ENCODE measurements at regions of chr10 and their contacts with region 1.

Region 1: GRCh38 chr10:4767033-4767814 is 58.8 kb upstream of the AKR1E2 start:
- DNase-seq: no peak
- ATAC-seq: peak; percentile 74
- H3K4me3 ChIP-seq: no peak overlapping the region
- H3K27ac ChIP-seq: no peak overlapping the region
- H3K4me1 ChIP-seq: peaks cover 3 to 5% of the 10 kb centered on the region in 2 donors
- H3K27me3 ChIP-seq: no peaks in the 10 kb centered on the region

Region 2: GRCh38 chr10:3197348-3198003 is 1569.7 kb before region 1 on chr10:
- intact Hi-C with region 1: loop called (anchors 10 kb)
- DNase-seq: peak; percentile 87 to 94
- ATAC-seq: peak; percentile 94
- H3K4me3 ChIP-seq: no peak overlapping the region
- H3K27ac ChIP-seq: peak overlapping the region in 1 of 2 donors; percentile 22
- H3K4me1 ChIP-seq: no peaks in the 10 kb centered on the region
- H3K27me3 ChIP-seq: no peaks in the 10 kb centered on the region

Region 3: DNA sequence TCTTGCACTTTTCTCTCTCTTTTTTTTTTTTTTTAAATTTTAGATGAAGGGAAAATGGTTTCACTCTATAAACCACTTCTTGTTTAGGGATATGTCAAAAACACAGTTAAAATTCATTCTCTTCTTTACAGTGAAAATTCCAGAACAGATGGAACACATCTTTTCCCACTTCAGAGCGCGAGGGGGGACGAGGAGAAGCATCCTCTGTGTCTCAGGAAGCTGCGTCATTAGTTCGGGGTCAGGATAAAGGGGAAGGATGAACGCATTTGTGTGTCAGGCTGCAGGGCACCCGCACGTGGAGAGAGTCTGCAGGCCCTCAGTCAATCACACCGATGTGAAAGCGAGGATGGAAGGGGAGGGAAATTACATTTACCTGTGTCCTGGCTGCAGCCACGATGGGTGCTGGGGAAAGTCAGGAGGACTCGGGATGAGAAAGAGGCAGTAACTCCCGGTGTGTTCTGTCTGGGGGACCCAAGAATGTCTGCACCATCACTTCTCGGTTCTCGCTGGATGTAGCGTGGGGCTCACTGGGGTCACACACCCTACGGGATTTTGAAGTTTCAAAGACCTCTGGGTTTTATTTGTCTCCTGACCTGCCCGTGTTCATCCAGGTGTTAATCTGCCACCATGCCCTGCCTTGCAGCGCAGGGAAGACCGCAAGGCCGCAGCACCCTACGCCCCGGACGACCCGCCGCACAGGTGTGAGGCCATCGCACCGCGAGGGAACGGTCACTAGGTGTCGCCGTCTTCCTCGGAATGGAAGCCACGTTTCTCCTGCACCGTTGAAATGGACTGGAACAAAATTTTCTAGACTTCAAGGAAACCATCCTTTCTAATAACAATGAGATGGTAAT is 1527.9 kb before region 1 on chr10:
- intact Hi-C with region 1: loop called (anchors 5 kb)
- DNase-seq: peak; percentile 82 to 92
- ATAC-seq: peak; percentile 87
- H3K4me3 ChIP-seq: no peak overlapping the region
- H3K27ac ChIP-seq: no peak overlapping the region
- H3K4me1 ChIP-seq: no peaks in the 10 kb centered on the region
- H3K27me3 ChIP-seq: no peaks in the 10 kb centered on the region

Region 4: DNA sequence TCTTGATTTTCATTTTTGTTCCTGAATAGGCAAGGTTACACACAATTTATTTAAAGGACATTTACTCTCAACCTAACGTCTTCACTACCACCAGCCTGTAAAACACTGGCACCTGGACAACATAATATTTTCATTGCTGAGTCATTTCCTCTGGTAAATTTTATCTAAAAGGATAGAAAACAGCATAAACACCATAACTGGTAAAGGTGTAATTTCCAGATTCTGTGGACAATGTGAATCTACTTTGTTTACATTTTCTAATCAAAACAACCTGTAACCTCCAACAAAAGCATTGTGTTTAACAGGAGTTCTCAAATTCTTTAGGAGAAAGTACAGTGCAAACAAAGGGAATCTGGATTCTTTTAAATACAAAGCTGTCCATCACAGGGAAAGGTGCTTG is 413.3 kb before region 1 on chr10:
- intact Hi-C with region 1: loop called in 1 of 2 experiments (anchors 10 kb)
- DNase-seq: no peak
- ATAC-seq: peak; percentile 40
- H3K4me3 ChIP-seq: no peak overlapping the region
- H3K27ac ChIP-seq: peak overlapping the region in 1 of 2 donors; percentile 77
- H3K4me1 ChIP-seq: peaks cover 11 to 14% of the 10 kb centered on the region in 2 donors
- H3K27me3 ChIP-seq: no peaks in the 10 kb centered on the region

Region 5: DNA sequence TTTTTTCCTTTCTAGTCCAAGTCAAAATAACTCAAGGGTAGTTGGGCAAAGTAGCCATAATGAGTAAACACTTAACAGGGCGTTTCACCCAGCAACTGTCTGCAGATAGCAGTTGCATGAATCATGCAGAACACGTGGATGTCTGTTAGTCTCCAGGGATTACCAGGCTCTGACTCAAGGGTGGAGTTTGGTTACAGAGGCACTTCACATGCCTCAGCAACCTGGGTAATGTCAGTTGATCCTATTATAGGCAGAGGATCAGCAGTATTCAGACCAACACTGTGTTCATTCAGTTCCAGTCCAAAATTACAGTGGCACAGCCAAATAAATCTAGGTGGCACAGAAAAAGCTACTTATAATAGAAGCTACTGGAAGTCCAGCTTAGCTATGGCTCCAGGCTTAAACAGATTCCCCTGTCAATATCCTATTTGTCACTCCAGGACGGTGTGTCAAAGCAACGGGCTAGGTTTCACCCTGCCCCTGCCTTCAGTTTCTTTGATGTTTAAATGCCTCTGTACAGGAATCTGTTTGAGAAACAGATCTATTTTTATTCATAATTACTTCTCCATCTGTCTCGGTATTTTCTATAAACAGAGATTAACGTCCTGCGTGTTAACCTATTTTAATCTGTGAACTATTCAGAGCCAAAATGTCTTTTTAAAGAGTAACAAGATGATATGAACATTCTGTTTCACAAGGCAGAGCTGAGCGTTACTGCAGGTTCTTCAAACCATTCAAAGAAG is 103.9 kb before region 1 on chr10:
- intact Hi-C with region 1: loop called (anchors 5 to 10 kb)
- DNase-seq: peak in 1 of 2 donors; percentile 67
- ATAC-seq: peak; percentile 93
- H3K4me3 ChIP-seq: peak overlapping the region in 1 of 2 donors; percentile 10
- H3K27ac ChIP-seq: peak overlapping the region; percentile 89 to 95
- H3K4me1 ChIP-seq: peaks cover 0 to 7% of the 10 kb centered on the region in 2 donors
- H3K27me3 ChIP-seq: no peaks in the 10 kb centered on the region

Region 6: DNA sequence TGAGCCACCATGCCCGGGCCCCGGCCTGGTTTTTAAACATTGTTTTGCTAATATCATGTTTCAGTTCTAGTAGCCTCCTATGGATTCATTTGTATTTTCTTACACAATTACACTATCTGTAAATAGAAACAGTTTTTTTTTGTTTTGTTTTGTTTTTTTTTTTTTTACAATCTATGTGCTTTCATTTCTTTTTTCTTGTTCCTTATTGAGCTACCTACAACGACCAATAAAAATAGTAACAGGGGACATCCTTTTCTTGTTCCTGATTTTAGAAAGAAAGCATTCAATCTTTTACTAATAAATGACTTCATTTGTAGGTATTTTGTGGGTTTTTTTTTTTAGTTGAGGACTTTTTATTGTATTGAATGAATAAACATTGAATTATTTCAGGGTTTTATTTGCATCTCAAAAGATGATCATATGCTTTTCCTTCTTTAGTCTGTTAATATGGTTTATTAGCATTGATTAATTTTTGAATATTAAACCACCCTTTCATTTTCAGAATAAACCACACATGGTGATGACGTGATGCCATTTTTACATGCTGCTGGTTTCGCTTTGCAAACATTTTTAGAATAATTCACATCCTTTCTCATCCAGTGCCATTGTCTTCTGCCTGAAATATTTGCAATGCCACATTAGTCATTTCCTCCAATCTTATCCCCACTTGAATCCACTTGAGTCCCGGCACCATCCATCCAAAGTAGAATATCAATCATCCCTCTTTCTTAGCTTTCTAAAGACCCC is 40.7 kb after region 1 on chr10:
- intact Hi-C with region 1: no loop called
- DNase-seq: no peak
- ATAC-seq: no peak
- H3K4me3 ChIP-seq: no peak overlapping the region
- H3K27ac ChIP-seq: no peak overlapping the region
- H3K4me1 ChIP-seq: no peaks in the 10 kb centered on the region
- H3K27me3 ChIP-seq: no peaks in the 10 kb centered on the region